ENCODE measurements at regions of chr10 and their contacts with region 1.

Region 1: DNA sequence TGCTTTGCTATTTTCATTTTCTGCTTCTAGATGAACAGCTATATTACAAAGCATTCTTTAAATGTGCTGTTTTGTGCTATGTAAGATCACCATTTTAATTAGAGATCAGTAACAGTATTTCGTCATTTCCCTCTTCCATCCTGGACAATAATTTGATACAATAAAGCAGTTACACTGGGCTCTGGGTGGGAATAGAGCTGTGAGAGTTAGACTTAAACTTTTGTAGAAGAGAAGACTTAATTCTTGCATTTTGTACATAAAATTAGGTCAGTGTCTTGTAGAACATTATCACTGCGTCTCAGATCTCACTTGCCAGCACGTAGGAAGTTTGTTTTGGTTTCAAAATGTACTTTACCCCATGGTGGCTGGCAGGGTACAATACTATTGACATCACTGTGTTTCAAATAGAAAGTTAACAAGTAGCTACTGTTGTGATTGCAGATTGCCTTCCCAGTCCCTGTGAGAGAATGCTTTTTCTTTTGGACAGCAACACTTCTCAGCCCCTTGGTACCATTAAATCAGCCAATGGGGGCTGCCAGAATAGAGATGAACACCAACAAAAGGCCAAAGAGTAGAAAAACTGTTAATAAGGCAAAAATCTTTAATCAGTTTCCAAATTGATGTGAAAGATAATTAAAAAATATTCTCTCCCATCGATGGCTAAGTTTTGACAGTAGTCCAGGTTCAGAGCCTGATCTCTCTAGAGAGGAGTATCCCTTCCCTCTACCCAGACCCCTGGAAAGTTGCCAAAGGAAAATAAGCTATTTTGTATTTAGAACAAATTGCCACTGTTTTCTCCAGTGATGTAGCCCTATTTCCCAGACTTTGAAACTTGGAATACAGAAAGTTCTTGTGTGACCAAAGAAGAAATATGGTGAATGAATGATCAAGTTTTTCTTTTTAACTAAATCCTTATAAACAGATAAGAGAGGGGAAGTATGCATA is 35.1 kb downstream of the SMNDC1 start:
- DNase-seq: no peak
- ATAC-seq: peak; percentile 86 to 94 (median 92)
- H3K4me3 ChIP-seq: peak overlapping the region; percentile 59
- H3K27ac ChIP-seq: peak overlapping the region; percentile 81
- H3K4me1 ChIP-seq: peaks cover 61% of the 10 kb centered on the region
- H3K27me3 ChIP-seq: no peaks in the 10 kb centered on the region
- CTCF ChIP-seq: no peak

Region 2: GRCh38 chr10:110233846-110234245 is 35.8 kb before region 1 on chr10:
- intact Hi-C with region 1: loop called in 1 of 2 experiments (anchors 5 kb)
- DNase-seq: no peak
- ATAC-seq: no peak
- H3K4me3 ChIP-seq: no peak overlapping the region
- H3K27ac ChIP-seq: no peak overlapping the region
- H3K4me1 ChIP-seq: peaks cover 6% of the 10 kb centered on the region
- H3K27me3 ChIP-seq: no peaks in the 10 kb centered on the region
- CTCF ChIP-seq: no peak